Heart left ventricle (tissue), 16 donors: ENCODE measurements at regions of chr3 and their contacts with region 1.

Region 1: DNA sequence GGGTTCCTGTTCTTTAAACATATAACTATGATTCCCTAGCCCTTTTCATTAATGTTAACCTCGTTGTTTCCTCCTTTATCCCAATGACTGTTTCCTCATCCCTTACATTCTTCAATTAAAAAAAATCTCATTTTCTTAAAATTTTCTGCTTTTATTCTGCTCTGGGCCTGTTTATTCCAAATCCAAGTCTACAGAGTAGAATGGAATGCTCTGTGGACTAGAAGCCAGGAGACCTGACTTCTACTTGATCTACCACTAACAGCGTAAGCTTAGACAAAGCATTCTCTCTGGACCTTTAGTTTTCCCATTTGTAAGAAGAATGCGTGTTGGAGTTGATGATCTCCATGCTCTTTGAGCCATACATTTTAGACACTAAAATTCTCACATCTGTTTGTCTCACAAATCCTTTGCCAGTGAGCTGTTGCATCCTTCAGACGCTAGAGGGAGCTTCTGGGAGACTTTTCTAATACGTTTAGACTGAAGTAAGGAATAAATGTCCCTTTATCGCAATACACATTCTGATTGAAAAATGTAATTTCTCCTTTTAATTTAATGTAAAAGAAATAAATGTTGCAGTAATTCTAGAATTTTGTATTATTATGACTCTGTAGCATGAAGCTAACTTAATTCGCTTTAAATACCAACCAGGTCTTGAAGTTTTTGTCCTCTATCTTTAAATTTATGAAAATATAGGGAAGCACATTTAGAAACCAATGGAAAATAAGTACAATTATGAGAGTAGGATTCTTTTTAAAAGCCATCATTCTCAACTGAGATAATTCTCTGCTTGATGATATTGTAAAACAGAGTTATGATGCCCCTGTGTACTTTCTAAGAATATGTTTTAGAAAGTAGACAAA is 21.7 kb upstream of the GMNC start:
- DNase-seq: no peak
- ATAC-seq: no peak
- H3K4me3 ChIP-seq: no peak overlapping the region
- H3K27ac ChIP-seq: no peak overlapping the region
- H3K4me1 ChIP-seq: no peaks in the 10 kb centered on the region
- H3K27me3 ChIP-seq: no peaks in the 10 kb centered on the region
- CTCF ChIP-seq: peak; percentile 73 to 94 (median 86)
- POLR2A ChIP-seq: no peak

Region 2: DNA sequence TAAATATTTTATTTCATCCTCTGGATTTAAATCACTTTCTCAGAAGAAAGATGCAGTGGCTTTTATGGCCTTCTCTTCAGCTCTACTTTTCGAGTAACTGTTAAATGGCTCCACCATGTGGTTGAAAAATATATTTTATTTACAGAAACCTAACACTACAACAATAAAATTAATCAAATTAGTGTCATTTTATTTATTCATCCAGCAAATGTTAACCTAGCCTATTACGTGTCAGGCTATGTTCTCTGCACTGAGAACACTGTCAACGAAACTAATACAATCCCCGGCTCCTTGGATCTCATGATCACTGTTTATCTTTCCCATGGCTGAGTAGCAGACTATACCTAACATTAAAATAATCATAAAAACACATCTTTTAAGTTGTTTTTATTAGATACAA is 166.8 kb after region 1 on chr3:
- intact Hi-C with region 1: loop called (anchors 5 to 10 kb)
- DNase-seq: no peak
- ATAC-seq: no peak
- H3K4me3 ChIP-seq: no peak overlapping the region
- H3K27ac ChIP-seq: no peak overlapping the region
- H3K4me1 ChIP-seq: no peaks in the 10 kb centered on the region
- H3K27me3 ChIP-seq: no peaks in the 10 kb centered on the region
- CTCF ChIP-seq: peak; percentile 21 to 59 (median 50)
- POLR2A ChIP-seq: no peak